GM12878 (cell line): ENCODE measurements at regions of chr9 and their contacts with region 1.

Region 1: DNA sequence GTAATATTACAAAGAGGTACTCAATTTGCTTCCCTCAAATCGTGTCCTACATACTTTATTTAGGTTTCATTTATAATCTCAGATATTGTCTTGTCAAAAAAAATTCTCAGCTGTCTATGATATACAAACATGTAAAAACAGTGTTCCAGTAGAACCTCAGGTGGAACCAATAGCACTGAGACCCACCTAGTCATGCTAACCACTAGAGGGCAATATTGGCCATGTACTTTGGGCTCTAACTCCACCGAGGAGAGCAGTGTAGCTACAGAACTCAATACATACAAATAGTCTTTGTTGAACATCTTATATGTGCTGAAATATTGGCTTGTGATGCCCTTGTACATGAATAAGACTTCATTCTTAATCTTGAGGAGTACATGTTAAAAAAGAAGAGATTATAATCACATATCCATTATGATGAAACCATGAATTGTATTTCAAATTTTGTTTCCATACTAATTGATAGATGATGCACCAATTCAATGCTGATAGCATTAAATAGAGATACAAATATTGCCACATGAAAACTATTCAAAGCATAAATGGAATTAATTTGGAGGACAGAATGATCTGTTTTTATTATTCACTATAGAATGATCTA is 71.2 kb upstream of the CNTLN start:
- DNase-seq: no peak
- ATAC-seq: peak; percentile 95
- H3K4me3 ChIP-seq: no peak overlapping the region
- H3K27ac ChIP-seq: no peak overlapping the region
- H3K4me1 ChIP-seq: no peaks in the 10 kb centered on the region
- H3K27me3 ChIP-seq: no peaks in the 10 kb centered on the region
- CTCF ChIP-seq: peak; percentile 56 to 63 (median 58)
- EP300 ChIP-seq: no peak
- POLR2A ChIP-seq: no peak
- RAD21 ChIP-seq: peak; percentile 54

Region 2: GRCh38 chr9:17052626-17053025 is 11.0 kb before region 1 on chr9:
- CTCF ChIA-PET with region 1: interaction called, 15 read pairs
- POLR2A ChIA-PET with region 1: no interaction called
- RAD21 ChIA-PET with region 1: no interaction called
- SMC1A ChIA-PET with region 1: interaction called, 3 read pairs
- in situ Hi-C with region 1: no loop called
- intact Hi-C with region 1: no loop called
- DNase-seq: no peak
- ATAC-seq: no peak
- H3K4me3 ChIP-seq: no peak overlapping the region
- H3K27ac ChIP-seq: no peak overlapping the region
- H3K4me1 ChIP-seq: no peaks in the 10 kb centered on the region
- H3K27me3 ChIP-seq: no peaks in the 10 kb centered on the region
- CTCF ChIP-seq: no peak
- EP300 ChIP-seq: no peak
- POLR2A ChIP-seq: no peak
- RAD21 ChIP-seq: no peak

Region 3: GRCh38 chr9:17075146-17075757 is 11.6 kb after region 1 on chr9:
- CTCF ChIA-PET with region 1: interaction called, 15 read pairs
- POLR2A ChIA-PET with region 1: no interaction called
- RAD21 ChIA-PET with region 1: no interaction called
- SMC1A ChIA-PET with region 1: interaction called, 5 read pairs
- in situ Hi-C with region 1: no loop called
- intact Hi-C with region 1: no loop called
- DNase-seq: no peak
- ATAC-seq: no peak
- H3K4me3 ChIP-seq: no peak overlapping the region
- H3K27ac ChIP-seq: no peak overlapping the region
- H3K4me1 ChIP-seq: no peaks in the 10 kb centered on the region
- H3K27me3 ChIP-seq: no peaks in the 10 kb centered on the region
- CTCF ChIP-seq: no peak
- EP300 ChIP-seq: no peak
- POLR2A ChIP-seq: no peak
- RAD21 ChIP-seq: no peak

Region 4: DNA sequence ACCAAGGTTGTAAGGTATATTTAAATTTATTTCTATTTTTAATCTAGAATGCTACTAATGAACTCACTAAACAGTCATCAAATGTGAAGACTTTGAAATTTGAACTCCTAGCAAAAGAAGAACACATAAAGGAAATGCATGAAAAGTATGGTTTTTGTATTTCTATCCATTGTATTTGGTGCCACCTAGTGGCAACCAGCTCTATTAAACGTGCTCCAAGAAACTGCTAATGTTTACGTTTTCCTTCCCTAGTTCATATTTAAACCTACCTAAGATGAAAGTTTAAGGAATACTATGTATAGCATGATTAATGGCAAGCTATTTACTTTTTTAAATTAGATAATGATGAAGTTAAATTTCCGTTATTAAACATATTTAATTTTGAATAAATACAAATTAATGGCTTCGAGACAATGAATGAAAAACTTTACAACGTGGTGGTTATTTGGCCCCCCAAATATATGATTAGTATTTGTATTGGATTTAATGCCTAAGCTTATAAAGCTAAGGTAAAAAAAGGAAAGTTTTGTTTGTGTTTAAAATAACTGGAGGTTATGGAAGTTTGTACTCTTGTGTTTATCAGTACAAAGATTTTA is 399.3 kb after region 1 on chr9:
- CTCF ChIA-PET with region 1: interaction called, 63 read pairs
- POLR2A ChIA-PET with region 1: no interaction called
- RAD21 ChIA-PET with region 1: interaction called, 28 read pairs
- SMC1A ChIA-PET with region 1: interaction called, 16 read pairs
- in situ Hi-C with region 1: no loop called
- intact Hi-C with region 1: loop called (anchors 2 kb)
- DNase-seq: no peak
- ATAC-seq: peak; percentile 66
- H3K4me3 ChIP-seq: no peak overlapping the region
- H3K27ac ChIP-seq: no peak overlapping the region
- H3K4me1 ChIP-seq: no peaks in the 10 kb centered on the region
- H3K27me3 ChIP-seq: no peaks in the 10 kb centered on the region
- CTCF ChIP-seq: peak; percentile 55 to 73 (median 58); a peak in 5 of 6 replicates
- EP300 ChIP-seq: no peak
- POLR2A ChIP-seq: no peak
- RAD21 ChIP-seq: peak; percentile 81